Mammary epithelial cell (primary cell): ENCODE measurements at regions of chr9 and their contacts with region 1.

Region 1: DNA sequence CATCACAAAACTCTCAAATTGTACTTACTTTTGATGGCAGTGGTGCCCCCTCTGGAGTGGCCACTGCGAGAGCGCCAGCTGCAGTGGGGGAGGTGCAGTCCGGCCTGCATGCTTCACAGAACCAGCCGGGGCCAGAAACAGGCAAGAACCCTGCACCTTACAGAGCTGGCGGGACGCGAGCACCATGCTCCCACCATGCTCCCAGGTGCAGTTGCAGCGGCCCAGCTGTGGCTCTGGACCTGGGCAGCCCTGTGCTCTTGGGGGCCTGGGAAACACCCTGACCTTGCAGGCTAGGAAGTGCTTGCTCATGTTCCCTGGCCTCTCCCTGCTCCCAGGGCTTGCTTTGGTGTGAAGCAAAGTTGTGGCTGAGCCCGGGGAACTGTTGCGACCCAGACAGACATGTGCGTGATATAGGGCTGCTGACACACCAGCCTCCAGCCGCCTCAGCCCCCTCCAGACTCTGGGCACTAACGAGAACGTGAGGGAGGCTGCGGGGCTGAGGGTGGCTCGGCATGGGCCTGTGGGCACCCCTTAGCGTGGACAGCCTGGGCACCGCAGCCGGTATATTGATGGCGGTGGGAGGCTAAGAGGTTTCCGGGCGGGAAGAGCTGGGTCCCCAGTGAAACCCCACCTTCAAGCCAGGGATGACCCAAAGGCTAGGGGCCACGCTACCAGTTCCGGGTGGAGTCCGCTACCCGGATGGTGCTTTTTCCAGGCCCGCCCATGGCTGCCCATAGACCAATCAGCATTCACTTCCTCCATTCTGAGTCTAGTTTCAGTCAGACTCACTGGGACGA is 1809.9 kb upstream of the ACO1 start:
- DNase-seq: no peak
- H3K4me3 ChIP-seq: no peak overlapping the region
- H3K27ac ChIP-seq: no peak overlapping the region
- H3K4me1 ChIP-seq: no peaks in the 10 kb centered on the region
- H3K27me3 ChIP-seq: no peaks in the 10 kb centered on the region
- CTCF ChIP-seq: no peak

Region 2: DNA sequence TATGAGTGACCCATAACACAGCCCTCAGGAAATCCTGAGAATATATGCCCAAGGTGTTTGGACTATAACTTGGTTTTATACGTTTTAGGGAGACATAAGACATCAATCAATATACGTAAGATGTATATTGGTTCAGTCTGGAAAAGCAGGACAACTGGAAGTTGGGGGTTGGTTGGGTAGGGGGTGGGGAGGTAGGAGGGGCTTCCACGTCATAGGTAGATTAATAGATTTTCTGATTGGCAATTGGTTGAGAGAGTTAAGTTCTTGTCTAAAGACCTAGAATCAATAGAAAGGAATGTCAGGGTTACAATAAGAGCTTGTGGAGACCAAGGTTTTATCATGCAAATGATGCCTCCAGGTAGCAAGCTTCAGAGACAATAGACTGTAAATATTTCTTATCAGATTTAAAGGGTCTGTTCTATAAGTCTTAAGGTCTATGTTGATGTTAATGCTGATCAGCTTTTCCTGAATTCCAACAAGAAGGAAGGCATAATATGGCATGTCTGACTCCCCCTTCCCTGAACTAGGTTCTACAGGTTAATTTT is 457.8 kb before region 1 on chr9:
- CTCF ChIA-PET with region 1: no interaction called
- dilution Hi-C with region 1: no loop called
- in situ Hi-C with region 1: no loop called
- intact Hi-C with region 1: no loop called
- DNase-seq: no peak
- H3K4me3 ChIP-seq: no peak overlapping the region
- H3K27ac ChIP-seq: no peak overlapping the region
- H3K4me1 ChIP-seq: no peaks in the 10 kb centered on the region
- H3K27me3 ChIP-seq: no peaks in the 10 kb centered on the region
- CTCF ChIP-seq: no peak

Region 3: GRCh38 chr9:30459156-30459555 is 115.4 kb before region 1 on chr9:
- CTCF ChIA-PET with region 1: no interaction called
- dilution Hi-C with region 1: no loop called
- in situ Hi-C with region 1: loop called in 1 of 2 experiments (anchors 25 kb)
- intact Hi-C with region 1: no loop called
- DNase-seq: no peak
- H3K4me3 ChIP-seq: no peak overlapping the region
- H3K27ac ChIP-seq: no peak overlapping the region
- H3K4me1 ChIP-seq: no peaks in the 10 kb centered on the region
- H3K27me3 ChIP-seq: no peaks in the 10 kb centered on the region
- CTCF ChIP-seq: no peak

Region 4: DNA sequence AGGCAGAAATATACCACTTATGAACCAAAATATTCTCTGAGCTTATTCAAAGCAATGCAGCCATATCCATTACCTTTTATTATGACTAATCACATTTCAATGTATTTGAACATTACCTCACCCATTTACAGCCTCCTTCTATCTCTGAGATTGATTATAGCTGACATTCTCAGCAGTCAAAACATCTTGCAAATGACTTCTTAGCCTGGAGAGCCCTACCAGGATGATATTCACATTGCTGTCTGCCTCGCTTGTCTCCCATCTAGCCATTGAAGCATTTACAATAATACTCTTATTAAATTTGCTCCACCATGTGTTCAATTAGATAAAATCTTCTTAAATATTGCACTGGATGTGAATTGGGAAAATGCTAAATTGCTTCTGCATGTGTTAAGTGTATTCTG is 70.0 kb before region 1 on chr9:
- CTCF ChIA-PET with region 1: no interaction called
- dilution Hi-C with region 1: no loop called
- in situ Hi-C with region 1: no loop called
- intact Hi-C with region 1: no loop called
- DNase-seq: no peak
- H3K4me3 ChIP-seq: no peak overlapping the region
- H3K27ac ChIP-seq: no peak overlapping the region
- H3K4me1 ChIP-seq: no peaks in the 10 kb centered on the region
- H3K27me3 ChIP-seq: no peaks in the 10 kb centered on the region
- CTCF ChIP-seq: no peak